PC-9 (cell line): ENCODE measurements at regions of chr16 and their contacts with region 1.

Region 1: GRCh38 chr16:73878611-73879010 is 418.0 kb upstream of the PSMD7 start:
- DNase-seq: peak; percentile 2 to 38
- H3K4me3 ChIP-seq: no peak overlapping the region
- H3K27ac ChIP-seq: no peak overlapping the region
- H3K4me1 ChIP-seq: no peaks in the 10 kb centered on the region
- H3K27me3 ChIP-seq: peaks cover 33% of the 10 kb centered on the region
- CTCF ChIP-seq: peak; percentile 61

Region 2: DNA sequence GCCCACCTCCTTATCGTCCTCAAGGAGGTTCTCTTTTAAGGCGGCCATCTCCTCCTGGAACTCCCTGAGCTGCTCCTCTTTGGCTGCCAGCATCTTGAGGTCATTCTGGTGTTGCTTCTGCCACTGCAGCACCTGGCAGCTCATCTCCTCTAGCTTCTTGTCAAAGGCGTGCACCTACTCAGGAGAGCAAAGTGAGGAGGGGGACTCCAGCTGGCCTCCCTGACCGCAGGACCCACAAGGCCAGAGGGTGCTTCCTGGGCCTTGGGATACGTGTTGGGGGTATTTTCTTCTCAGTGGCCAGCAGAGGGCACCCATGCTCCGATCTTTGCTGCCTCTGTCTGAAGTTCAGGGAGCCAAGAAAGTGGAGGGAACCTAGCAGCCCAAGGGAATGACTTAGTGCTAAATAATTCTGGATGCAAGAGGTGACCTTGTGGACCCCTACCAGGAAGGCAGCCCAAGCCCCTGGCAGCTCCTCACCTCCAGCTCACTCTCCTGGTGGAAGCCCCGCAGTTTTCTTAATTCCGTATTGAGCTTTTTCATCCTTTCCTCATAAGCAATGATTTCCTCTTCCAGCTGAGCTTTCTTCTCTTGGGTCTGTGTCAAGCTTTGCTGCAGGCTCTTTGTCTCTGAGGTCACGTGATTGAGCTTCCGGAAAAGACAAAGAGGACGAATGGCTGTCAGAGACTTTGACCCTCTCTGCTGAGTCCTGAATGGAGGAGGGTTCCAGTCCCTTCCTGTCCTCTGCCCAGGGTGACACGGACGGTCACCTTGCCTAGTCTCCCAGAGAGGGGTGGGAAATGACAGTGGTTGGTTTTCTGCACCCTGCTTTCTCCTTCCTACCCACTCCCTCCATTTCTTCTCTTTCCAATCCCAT is 1753.6 kb before region 1 on chr16:
- CTCF ChIA-PET with region 1: no interaction called
- POLR2A ChIA-PET with region 1: no interaction called
- intact Hi-C with region 1: loop called (anchors 1 kb)
- DNase-seq: peak; percentile 39 to 60
- H3K4me3 ChIP-seq: no peak overlapping the region
- H3K27ac ChIP-seq: no peak overlapping the region
- H3K4me1 ChIP-seq: no peaks in the 10 kb centered on the region
- H3K27me3 ChIP-seq: peaks cover 21% of the 10 kb centered on the region
- CTCF ChIP-seq: peak; percentile 87

Region 3: DNA sequence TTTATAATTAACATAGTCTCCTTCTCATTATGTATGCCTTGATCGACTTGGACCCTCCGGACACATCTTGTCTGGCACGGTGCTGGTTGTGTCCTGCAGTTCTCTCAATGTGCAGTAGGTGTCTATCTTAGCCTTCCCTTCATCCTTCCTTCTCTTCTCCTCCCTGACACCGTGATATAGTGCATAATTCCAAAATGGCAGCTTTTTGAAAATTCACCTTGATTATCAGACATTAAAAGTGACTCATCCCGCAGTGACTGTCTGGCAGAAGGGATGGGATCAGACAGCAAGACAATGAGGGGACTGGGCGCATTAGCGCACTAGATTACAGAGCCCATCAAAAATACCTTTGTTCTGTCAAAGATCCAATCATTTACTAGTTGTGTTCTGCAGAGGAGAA is 1636.7 kb before region 1 on chr16:
- CTCF ChIA-PET with region 1: no interaction called
- POLR2A ChIA-PET with region 1: no interaction called
- intact Hi-C with region 1: loop called (anchors 5 kb)
- DNase-seq: peak in 1 of 2 experiments; percentile 22
- H3K4me3 ChIP-seq: no peak overlapping the region
- H3K27ac ChIP-seq: no peak overlapping the region
- H3K4me1 ChIP-seq: no peaks in the 10 kb centered on the region
- H3K27me3 ChIP-seq: no peaks in the 10 kb centered on the region
- CTCF ChIP-seq: peak; percentile 79

Region 4: DNA sequence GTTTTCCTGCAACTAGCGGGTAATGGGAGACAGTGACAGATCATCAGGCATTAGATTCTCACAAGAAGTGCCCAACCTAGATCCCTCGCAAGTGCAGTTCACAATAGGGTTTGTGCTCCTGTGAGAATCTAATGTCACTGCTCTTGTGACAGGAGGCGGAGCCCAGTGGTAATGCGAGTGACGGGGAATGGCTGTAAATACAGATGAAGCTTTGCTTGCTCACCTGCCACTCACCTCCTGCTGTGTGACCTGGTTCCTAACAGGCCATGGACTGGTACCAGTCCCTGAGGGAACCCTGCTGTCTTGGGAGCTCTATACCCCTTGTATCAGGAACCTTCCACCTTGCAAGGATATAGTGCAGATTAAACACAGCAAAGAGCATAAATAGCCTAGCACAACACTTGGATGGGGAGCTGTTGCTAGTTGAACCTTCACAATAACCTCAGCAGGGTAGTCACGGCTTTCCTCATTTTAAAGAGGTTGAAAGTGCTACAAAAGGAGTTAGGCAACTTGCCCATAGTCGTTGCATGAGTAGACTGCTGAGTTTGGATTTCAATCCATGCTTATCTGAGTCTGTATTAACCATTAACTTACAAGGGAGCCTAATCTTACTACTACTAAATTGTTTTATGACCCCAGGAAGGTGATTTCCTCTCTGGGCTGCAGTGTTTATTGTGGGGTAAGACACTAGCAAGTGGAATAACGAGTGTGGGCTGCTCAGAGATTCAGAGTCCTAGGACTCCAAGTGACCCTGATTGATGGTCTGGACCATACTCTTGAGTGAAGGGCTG is 674.0 kb before region 1 on chr16:
- CTCF ChIA-PET with region 1: interaction called, 4 read pairs
- POLR2A ChIA-PET with region 1: no interaction called
- intact Hi-C with region 1: loop called (anchors 5 kb)
- DNase-seq: no peak
- H3K4me3 ChIP-seq: no peak overlapping the region
- H3K27ac ChIP-seq: no peak overlapping the region
- H3K4me1 ChIP-seq: no peaks in the 10 kb centered on the region
- H3K27me3 ChIP-seq: no peaks in the 10 kb centered on the region
- CTCF ChIP-seq: no peak

Region 5: DNA sequence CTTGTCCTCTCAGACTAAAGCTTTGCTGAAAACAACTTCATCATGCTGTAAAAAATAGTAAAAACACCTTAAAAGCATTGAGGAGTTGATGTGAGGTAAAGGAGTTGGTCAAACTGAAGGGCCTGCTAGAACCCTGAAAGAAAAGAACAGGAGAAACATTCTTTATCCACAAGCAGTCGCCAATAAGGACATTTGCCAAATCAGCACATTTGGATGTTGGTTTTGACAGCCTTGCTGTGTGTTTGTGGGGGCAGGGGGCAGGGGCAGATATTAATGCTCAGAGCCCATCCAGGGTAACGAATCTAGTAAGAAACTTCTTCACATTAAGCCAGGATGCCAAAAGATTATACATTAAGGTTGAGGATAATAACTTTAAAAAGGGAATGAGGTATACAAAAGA is 430.8 kb before region 1 on chr16:
- CTCF ChIA-PET with region 1: no interaction called
- POLR2A ChIA-PET with region 1: no interaction called
- intact Hi-C with region 1: no loop called
- DNase-seq: no peak
- H3K4me3 ChIP-seq: no peak overlapping the region
- H3K27ac ChIP-seq: no peak overlapping the region
- H3K4me1 ChIP-seq: no peaks in the 10 kb centered on the region
- H3K27me3 ChIP-seq: peaks cover 7% of the 10 kb centered on the region; the same call in 1 of the 2 replicates
- CTCF ChIP-seq: no peak

Region 6: GRCh38 chr16:73565262-73565661 is 313.3 kb before region 1 on chr16:
- CTCF ChIA-PET with region 1: no interaction called
- POLR2A ChIA-PET with region 1: no interaction called
- intact Hi-C with region 1: loop called (anchors 10 kb)
- DNase-seq: no peak
- H3K4me3 ChIP-seq: no peak overlapping the region
- H3K27ac ChIP-seq: no peak overlapping the region
- H3K4me1 ChIP-seq: no peaks in the 10 kb centered on the region
- H3K27me3 ChIP-seq: peaks cover 61% of the 10 kb centered on the region
- CTCF ChIP-seq: peak; percentile 44

Region 7: DNA sequence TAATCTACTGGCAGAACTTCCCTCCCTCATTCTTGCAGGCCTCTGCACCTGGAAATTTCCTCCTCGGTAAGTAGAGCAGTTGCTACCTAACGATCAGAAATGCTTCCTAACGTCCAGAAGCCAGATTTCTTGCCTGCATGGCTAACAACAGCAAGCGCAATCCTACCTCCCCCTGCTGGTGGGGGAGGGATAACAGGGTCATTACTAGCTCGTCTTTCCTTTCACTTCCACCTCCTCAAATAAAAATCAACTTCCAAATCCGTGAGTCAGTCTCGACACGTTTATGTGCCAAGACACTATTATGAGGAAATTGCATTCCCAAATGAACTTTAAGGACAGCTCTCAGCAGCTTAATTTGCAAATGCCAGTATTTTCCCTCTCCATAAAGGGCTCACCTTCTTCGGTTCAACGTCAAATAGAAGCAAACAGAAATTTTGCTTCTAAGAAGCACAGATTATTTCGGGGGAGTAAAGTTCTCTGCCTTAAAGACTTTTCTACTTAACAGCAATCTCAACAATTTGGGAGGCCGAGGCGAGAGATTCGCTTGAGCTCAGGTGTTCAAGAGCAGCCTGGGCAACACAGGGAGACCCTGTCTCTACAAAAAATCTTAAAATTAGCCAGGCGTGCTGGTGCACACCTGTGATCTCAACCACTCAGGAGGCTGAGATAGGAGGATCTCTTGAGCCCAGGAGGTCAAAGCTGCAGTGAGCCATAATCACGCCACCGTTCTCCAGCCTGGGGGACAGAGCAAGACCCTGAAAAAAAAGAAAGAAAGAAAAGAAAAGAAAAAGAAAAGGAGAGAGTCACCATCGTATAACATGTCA is 229.4 kb after region 1 on chr16:
- CTCF ChIA-PET with region 1: no interaction called
- POLR2A ChIA-PET with region 1: no interaction called
- intact Hi-C with region 1: no loop called
- DNase-seq: peak; percentile 28 to 34
- H3K4me3 ChIP-seq: no peak overlapping the region
- H3K27ac ChIP-seq: no peak overlapping the region
- H3K4me1 ChIP-seq: no peaks in the 10 kb centered on the region
- H3K27me3 ChIP-seq: no peaks in the 10 kb centered on the region
- CTCF ChIP-seq: peak; percentile 60